Activated T-helper 1 cell treated with anti-CD3 and anti-CD28 coated beads, Interleukin-12 subunit alpha, Interleukin-12 subunit beta, Interleukin-2, Interleukin-4 antibody, amounts not matched to agents 30 ng/mL and 10 ng/mL and 1 ng/mL, durations not matched to agents 14 hours and 24 hours and 36 hours (primary cell): ENCODE measurements at regions of chrX and their contacts with region 1.

Region 1: GRCh38 chrX:16123222-16123786 is at the start of gene GRPR:
- DNase-seq: peak; percentile 6
- H3K4me3 Mint-ChIP-seq: no peak within 1 kb of the TSS
- H3K27ac Mint-ChIP-seq: no peak within 1 kb of the TSS
- H3K4me1 Mint-ChIP-seq: peaks cover 17% of the 10 kb centered on the region
- H3K27me3 Mint-ChIP-seq: peaks cover 13% of the 10 kb centered on the region
- total RNA-seq, gene GRPR: not detected in 2 replicates

Region 2: DNA sequence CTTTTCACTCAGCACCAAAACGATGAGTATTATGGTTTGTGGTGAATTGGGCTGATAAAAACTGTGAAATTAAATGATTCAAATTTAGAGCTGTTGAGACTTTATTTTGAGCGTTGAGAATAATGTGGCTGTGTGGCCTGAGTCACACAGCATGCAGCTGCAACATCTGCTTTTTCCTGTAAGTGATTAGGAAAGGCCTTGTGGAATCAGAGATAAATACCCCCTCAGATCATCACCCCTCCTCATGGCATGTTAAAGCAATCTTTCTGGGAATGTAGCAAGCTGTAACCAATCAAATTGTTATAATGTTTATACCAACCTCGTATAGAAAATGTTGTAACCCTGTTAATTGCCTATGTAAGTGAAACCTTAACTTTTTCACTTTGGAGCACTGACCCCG is 90.0 kb before region 1 on chrX:
- intact Hi-C with region 1: no loop called
- DNase-seq: no peak
- H3K4me3 Mint-ChIP-seq: no peak overlapping the region
- H3K27ac Mint-ChIP-seq: no peak overlapping the region
- H3K4me1 Mint-ChIP-seq: no peaks in the 10 kb centered on the region
- H3K27me3 Mint-ChIP-seq: peaks cover 4% of the 10 kb centered on the region

Region 3: GRCh38 chrX:16695079-16695676 is 571.9 kb after region 1 on chrX:
- intact Hi-C with region 1: loop called (anchors 1 kb)
- DNase-seq: peak; percentile 25
- H3K4me3 Mint-ChIP-seq: no peak overlapping the region
- H3K27ac Mint-ChIP-seq: no peak overlapping the region
- H3K4me1 Mint-ChIP-seq: no peaks in the 10 kb centered on the region
- H3K27me3 Mint-ChIP-seq: no peaks in the 10 kb centered on the region